ENCODE measurements at regions of chr10 and their contacts with region 1.

Region 1: DNA sequence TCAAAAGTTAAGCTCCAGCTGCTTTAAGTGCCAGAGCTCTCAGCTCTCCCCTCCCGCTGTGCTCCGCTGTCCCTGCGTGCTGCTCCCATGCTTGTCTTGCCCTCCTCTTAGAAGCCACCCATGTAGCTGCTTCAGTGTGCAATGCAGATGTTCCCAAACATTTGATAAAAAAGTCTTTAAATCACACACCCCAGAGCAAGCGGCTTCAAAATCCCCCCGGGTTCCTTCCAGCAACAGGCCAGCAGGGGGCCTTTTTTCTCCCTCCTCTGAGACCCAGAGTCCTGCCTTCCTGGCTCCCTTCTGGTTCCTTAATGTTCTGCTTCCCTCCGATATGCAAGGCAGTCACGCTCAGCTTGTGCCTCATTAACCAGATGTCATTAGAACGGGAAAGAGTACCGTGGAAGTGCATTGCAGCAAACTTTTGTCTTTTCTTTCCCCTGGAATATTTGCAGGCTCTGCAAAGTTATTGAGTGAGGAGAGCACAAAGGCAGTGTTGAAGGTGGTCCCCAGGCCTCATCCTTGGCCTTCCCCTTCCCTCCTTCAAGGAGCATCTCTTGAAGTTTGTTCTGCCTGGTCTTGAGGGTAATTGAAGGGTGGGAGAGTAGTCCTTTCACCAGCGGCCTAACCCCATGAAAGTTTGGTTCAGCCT is 25.5 kb downstream of the LDB3 start:
- DNase-seq: peak; percentile 56
- ATAC-seq: peak; percentile 68
- H3K4me3 Mint-ChIP-seq: no peak overlapping the region
- H3K27ac Mint-ChIP-seq: no peak overlapping the region
- H3K4me1 Mint-ChIP-seq: no peaks in the 10 kb centered on the region
- H3K27me3 Mint-ChIP-seq: no peaks in the 10 kb centered on the region
- CTCF ChIP-seq: peak; percentile 75

Region 2: DNA sequence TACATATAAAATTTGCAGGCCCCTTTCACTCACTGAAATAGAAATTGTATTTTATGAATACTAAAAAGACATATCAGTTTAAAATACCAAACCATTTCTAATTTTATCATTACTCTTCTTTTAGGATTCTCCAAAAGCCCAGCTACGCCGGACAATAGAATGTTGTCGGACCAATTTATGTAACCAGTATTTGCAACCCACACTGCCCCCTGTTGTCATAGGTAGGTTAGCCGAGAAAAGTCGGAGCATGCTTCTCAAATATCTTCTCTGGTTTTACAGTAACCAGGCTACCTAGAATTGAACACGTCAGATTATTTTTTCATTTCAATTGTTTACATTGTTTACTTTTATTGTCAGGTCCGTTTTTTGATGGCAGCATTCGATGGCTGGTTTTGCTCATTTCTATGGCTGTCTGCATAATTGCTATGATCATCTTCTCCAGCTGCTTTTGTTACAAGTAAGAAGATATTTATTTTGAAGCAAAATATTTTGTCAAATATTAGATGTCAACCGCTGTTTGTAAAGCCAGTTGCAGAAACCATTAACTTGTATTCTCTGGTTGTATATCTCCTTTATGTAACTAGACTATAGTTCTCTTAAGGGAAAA is 205.9 kb after region 1 on chr10:
- CTCF ChIA-PET with region 1: interaction called, 36 read pairs
- POLR2A ChIA-PET with region 1: no interaction called
- intact Hi-C with region 1: no loop called
- DNase-seq: peak; percentile 66
- ATAC-seq: peak; percentile 65
- H3K4me3 Mint-ChIP-seq: no peak overlapping the region
- H3K27ac Mint-ChIP-seq: no peak overlapping the region
- H3K4me1 Mint-ChIP-seq: no peaks in the 10 kb centered on the region
- H3K27me3 Mint-ChIP-seq: no peaks in the 10 kb centered on the region
- CTCF ChIP-seq: peak; percentile 74

Region 3: GRCh38 chr10:86905429-86905828 is 211.6 kb after region 1 on chr10:
- CTCF ChIA-PET with region 1: interaction called, 36 read pairs
- POLR2A ChIA-PET with region 1: no interaction called
- intact Hi-C with region 1: no loop called
- DNase-seq: no peak
- ATAC-seq: no peak
- H3K4me3 Mint-ChIP-seq: no peak overlapping the region
- H3K27ac Mint-ChIP-seq: no peak overlapping the region
- H3K4me1 Mint-ChIP-seq: no peaks in the 10 kb centered on the region
- H3K27me3 Mint-ChIP-seq: no peaks in the 10 kb centered on the region
- CTCF ChIP-seq: no peak